Activated CD4-positive, alpha-beta memory T cell treated with anti-CD3 and anti-CD28 coated beads, Interleukin-2, amount 10 ng/mL, durations not matched to agents 7 days and 5 days (primary cell): ENCODE measurements at regions of chr15 and their contacts with region 1.

Region 1: GRCh38 chr15:85840065-85840801 is 45.5 kb upstream of the KLHL25 start:
- DNase-seq: peak; percentile 80
- H3K4me3 Mint-ChIP-seq: peak overlapping the region; percentile 35
- H3K27ac Mint-ChIP-seq: no peak overlapping the region
- H3K4me1 Mint-ChIP-seq: peaks cover 4% of the 10 kb centered on the region
- H3K27me3 Mint-ChIP-seq: peaks cover 5% of the 10 kb centered on the region

Region 2: GRCh38 chr15:85730001-85730820 is 110.0 kb before region 1 on chr15:
- CTCF ChIA-PET with region 1: interaction called, 19 read pairs
- POLR2A ChIA-PET with region 1: no interaction called
- DNase-seq: peak; percentile 44
- H3K4me3 Mint-ChIP-seq: no peak overlapping the region
- H3K27ac Mint-ChIP-seq: peak overlapping the region; percentile 66
- H3K4me1 Mint-ChIP-seq: peaks cover 10% of the 10 kb centered on the region
- H3K27me3 Mint-ChIP-seq: no peaks in the 10 kb centered on the region